CD4-positive, alpha-beta T cell (primary cell): ENCODE measurements at regions of chr17 and their contacts with region 1.

Region 1: GRCh38 chr17:34482730-34483129 is 96.7 kb upstream of the TMEM132E start:
- DNase-seq: no peak
- ATAC-seq: no peak
- H3K4me3 ChIP-seq: no peak overlapping the region
- H3K4me3 Mint-ChIP-seq: no peak overlapping the region
- H3K27ac ChIP-seq: no peak overlapping the region
- H3K27ac Mint-ChIP-seq: no peak overlapping the region
- H3K4me1 ChIP-seq: no peaks in the 10 kb centered on the region
- H3K4me1 Mint-ChIP-seq: no peaks in the 10 kb centered on the region
- H3K27me3 ChIP-seq: peaks cover 5 to 21% of the 10 kb centered on the region in 2 experiments
- H3K27me3 Mint-ChIP-seq: peaks cover 50% of the 10 kb centered on the region
- CTCF ChIP-seq: no peak

Region 2: GRCh38 chr17:34452769-34453168 is 30.0 kb before region 1 on chr17:
- CTCF ChIA-PET with region 1: no interaction called
- POLR2A ChIA-PET with region 1: no interaction called
- intact Hi-C with region 1: loop called in 1 of 2 experiments (anchors 1 kb)
- DNase-seq: no peak
- ATAC-seq: no peak
- H3K4me3 ChIP-seq: no peak overlapping the region
- H3K4me3 Mint-ChIP-seq: no peak overlapping the region
- H3K27ac ChIP-seq: no peak overlapping the region
- H3K27ac Mint-ChIP-seq: no peak overlapping the region
- H3K4me1 ChIP-seq: no peaks in the 10 kb centered on the region
- H3K4me1 Mint-ChIP-seq: no peaks in the 10 kb centered on the region
- H3K27me3 ChIP-seq: peaks cover 10 to 11% of the 10 kb centered on the region in 2 experiments
- H3K27me3 Mint-ChIP-seq: peaks cover 63% of the 10 kb centered on the region
- CTCF ChIP-seq: no peak